Dorsolateral prefrontal cortex (tissue), 120 donors: ENCODE measurements at regions of chr2 and their contacts with region 1.

Region 1: DNA sequence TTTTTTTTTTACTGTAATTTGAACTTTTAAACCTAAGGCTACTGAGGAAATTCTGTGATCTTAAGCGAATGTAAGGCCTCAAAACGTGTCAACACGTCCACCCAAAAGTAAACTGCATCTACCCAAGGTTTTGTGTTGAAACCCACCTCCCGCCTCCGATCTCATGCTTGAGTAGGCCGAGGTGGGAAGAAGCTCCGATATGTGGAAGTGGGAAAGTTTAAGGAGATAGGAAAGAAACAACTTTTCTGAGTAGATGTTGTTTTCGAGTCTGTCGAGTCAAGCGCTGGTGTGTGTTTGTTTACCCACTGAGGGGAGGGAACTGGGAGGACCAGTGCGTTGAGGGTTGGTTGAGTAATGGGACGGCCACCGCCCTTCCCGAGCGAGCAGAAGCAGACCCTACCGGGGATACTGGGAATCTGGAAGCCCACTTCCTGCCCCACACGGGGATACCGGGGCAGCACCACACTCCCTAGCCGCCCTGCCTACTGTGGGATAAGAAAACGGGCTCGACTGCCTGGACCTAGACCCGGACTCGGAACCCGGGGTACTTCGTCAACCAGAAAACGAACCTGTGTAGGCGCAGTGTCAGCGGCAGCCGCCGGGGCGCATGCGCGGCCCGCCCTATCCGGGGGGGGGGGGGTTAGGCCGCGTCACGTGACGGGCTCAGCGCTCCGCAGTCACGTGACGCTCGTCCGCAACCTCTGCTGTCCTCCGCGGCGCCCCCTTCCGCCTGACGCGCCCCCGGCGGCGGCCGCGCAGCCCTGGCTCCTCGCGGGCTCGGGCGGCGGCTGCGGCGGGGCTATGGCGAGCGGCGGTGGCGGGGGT is at the start of gene RETREG2:
- DNase-seq: peak; percentile 70 to 81 (median 74)
- H3K4me3 ChIP-seq: peak within 1 kb of the TSS; percentile 71 to 100 (median 96)
- H3K27ac ChIP-seq: peak within 1 kb of the TSS; percentile 93 to 100 (median 99)
- H3K27me3 ChIP-seq: no peaks in the 10 kb centered on the region
- CTCF ChIP-seq: peak in 46 of 56 donors; percentile 13 to 90 (median 60)
- total RNA-seq, gene RETREG2: 151 to 274 (median 213) TPM

Region 2: DNA sequence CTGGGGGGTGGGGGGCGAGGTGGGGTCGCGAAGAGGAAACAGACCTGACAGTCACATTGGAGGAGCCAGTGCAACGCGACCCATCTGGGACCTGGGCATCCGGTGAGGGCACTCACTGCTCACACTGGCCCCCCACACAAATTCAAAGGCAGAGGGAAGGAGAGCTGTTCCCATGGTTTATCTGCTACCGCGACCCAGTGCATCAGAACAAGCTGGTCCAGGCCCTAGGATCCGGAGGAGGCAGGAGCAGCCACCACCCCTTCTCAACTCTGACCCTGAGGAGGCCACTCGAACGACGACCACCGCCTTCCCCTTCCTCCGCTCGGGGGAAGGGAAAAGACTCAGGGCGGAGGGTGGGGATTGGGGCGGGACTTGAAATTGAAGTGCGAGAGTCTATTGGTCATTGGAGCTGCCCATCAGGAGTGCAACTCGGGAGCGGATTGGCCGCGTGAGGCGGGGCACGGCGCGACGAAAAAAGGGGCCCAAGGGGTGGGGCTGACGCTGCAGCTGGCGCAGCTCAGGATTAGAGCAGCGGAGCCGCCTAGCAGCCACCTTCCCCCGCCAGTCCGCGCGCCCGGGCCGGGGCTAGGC is 218.5 kb before region 1 on chr2 and contains the start of gene CDK5R2:
- intact Hi-C with region 1: no loop called
- DNase-seq: peak; percentile 61 to 96 (median 90)
- H3K4me3 ChIP-seq: peak within 1 kb of the TSS; percentile 34 to 78 (median 62)
- H3K27ac ChIP-seq: peak within 1 kb of the TSS in 53 of 59 donors; percentile 9 to 92 (median 74)
- H3K27me3 ChIP-seq: peaks cover 0 to 75% (median 42%) of the 10 kb centered on the region in 45 donors
- CTCF ChIP-seq: no peak
- total RNA-seq, gene CDK5R2: 19.1 to 99.0 (median 62.6) TPM

Region 3: DNA sequence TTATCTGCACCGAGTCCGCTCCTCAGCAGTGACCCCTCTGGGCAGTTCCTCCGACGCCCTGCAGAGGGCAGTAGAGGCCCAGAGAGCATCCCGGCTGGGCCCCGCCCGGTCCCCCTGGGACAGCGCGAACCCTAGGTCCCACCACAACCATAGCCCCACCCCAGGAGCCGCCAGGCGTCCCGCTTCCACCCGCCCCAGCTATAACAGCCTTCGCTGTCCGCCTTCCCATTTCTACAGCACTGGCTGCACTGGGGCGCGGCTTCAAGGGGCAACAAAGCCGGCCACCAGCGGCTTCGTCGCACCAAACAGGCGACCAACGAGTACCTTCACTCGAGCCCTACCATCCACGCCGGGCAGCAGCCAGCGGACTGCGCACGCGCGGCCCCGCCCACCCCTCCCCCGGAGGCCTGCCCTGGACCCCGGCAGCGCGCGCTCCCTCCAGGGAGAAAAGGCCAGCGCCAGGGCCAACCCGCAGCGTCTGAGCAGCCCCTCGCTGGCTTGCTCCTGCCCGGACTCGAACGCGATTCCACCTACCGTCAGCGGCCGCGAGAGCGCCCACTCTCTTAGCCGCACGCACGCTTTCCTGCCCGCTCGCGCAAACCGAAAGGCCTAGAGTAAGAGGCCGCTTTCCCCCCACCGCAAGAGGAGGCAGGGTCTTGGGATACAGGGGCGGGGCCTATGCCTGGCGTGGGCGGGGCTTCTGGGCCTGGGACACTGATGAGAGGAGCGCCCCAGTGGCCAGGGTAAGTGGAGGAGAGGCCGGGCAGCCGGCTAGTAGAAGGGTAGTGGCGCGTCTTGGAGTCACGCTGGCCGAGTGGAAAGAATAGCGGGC is 17.4 kb before region 1 on chr2 and contains the start of gene NHEJ1:
- intact Hi-C with region 1: loop called (anchors 1 kb)
- DNase-seq: peak; percentile 93 to 97 (median 96)
- H3K4me3 ChIP-seq: peak within 1 kb of the TSS; percentile 56 to 97 (median 75)
- H3K27ac ChIP-seq: peak within 1 kb of the TSS; percentile 86 to 99 (median 96)
- H3K27me3 ChIP-seq: no peaks in the 10 kb centered on the region
- CTCF ChIP-seq: peak; percentile 91 to 100 (median 99)
- total RNA-seq, gene NHEJ1: 5.8 to 16.8 (median 10.2) TPM

Region 4: DNA sequence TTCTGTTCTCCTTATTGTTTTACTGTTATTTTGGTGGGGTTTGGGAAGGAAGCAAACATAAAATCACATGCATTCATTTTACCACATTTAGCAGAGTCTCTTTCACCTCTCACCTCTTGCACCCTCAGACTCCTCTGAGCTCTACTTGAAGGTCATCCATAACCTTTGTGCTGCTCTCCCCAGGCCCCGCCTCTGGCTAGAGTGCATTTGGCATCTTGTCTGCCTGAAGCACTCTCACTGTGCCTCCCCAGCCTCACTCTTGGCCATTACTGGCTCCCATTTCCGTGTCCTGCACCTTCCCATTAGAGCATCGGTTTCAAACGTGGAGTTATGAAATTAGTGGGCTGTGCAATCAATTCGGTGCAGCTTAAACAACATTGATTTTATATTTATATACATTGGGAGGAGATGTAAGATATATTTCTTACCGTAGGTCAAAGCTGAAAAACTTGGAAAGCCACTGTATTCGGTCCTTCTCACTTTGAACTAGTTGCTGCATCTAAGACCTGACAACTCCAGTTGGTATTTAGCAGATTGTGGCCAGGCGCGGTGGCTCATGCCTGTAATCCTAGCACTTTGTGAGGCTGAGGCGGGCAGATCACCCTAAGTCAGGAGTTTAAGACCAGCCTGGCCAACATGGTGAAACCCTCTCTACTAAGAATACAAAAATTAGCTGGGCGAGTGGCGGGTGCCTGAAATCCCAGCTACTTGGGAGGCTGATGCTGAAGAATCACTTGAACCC is 21.9 kb after region 1 on chr2:
- intact Hi-C with region 1: loop called in 1 of 2 experiments (anchors 2 kb)
- DNase-seq: no peak
- H3K4me3 ChIP-seq: no peak overlapping the region
- H3K27ac ChIP-seq: peak overlapping the region in 1 of 59 donors; percentile 11
- H3K27me3 ChIP-seq: no peaks in the 10 kb centered on the region
- CTCF ChIP-seq: no peak

Region 5: DNA sequence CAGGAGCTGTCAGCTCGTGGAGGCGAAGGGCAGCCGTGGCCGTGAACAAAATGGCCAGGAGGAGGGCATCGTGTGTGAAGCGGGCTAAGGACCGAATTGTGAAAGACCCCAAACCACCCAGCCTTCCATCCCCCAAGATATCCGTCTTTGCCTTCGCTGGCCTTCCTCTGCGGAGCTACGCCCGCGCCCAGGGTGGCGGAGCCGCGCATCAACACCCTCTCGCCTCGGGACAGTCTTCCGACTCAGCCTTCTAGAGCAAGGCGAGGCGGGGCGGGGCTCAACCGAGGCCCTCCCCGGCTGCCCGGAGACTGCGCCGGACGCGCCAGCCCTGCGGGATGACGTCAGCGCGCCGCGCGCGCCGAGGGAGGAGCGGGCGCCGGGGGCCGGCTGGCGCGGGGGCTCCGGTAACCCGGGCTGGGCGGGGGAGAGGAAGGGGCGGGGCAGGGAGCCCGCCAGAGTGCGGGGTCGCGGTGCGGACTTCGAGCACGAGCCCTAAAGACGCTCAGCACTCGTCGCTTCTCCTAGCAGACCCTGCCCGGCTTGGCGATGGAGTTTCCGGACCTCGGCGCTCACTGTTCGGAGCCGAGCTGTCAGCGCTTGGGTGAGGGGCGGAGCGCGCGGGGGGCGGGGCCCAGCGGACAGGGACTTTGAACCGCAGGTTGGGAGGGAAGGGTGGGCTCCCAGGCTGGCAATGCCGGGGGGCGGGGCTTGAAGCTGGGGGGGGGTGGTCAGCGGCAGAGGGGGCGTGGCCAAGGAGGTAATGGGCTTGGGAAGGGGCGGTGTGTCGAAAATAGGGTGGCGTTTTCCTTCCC is 28.9 kb after region 1 on chr2 and contains the start of gene ZFAND2B:
- intact Hi-C with region 1: loop called (anchors 2 to 5 kb)
- DNase-seq: peak; percentile 86 to 98 (median 95)
- H3K4me3 ChIP-seq: peak within 1 kb of the TSS; percentile 52 to 95 (median 80)
- H3K27ac ChIP-seq: peak within 1 kb of the TSS; percentile 85 to 99 (median 97)
- H3K27me3 ChIP-seq: no peaks in the 10 kb centered on the region
- CTCF ChIP-seq: peak in 34 of 56 donors; percentile 3 to 57 (median 26)
- total RNA-seq, gene ZFAND2B: 32.2 to 63.9 (median 46.1) TPM

Region 6: DNA sequence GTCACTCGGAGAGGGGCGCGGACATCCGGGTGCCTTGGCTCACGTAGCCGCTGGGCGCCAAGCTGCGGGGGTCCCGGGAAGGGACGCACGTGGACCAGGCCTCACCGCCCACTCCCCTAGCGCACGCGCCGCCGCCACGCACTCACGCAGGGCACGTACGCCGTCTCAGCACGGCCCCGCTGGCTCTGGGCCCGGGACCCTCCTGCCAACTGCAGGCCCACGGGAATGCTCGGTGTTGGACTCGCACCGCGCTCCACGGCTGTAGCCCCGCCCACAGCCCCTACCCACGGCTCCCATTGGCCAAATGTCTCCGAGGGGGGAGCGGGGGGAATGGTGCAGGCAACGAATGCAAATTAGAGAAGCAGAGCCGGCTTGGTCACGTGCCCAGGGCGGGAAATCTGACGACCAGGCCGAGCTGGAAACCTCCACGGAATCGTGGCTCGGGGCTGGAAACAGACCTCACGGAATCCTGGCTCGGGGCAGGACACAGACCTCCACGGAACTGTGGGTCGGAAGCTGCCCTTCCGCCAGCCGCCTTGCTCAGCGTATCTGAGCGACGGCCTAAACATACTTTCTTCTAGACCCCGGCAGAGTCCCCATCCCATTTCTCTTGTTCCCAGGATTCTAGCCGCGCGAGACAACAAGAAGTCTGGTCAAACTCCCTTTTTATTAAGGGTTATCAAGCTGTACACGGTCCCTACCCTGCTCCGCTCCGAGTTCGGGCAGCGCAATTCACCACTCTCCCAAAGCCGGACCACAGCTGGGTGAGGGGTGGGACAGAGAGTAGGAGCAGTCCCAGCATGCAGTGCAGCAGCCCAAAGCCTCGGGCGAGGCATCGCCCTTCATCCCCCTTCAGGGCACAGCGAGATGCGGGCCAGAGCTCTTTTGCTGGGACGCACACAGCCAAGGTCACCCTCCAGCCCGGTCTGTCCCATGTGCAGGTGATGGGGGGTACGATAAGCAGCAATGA is 41.3 kb after region 1 on chr2 and contains the start of gene ABCB6:
- intact Hi-C with region 1: loop called in 1 of 2 experiments (anchors 5 kb)
- DNase-seq: peak; percentile 94 to 99 (median 98)
- H3K4me3 ChIP-seq: peak within 1 kb of the TSS; percentile 40 to 95 (median 71)
- H3K27ac ChIP-seq: peak within 1 kb of the TSS; percentile 49 to 96 (median 91)
- H3K27me3 ChIP-seq: no peaks in the 10 kb centered on the region
- CTCF ChIP-seq: peak in 13 of 56 donors; percentile 2 to 55 (median 19)
- total RNA-seq, gene ABCB6: 25.8 to 68.6 (median 40.0) TPM

Region 7: GRCh38 chr2:219266886-219267285 is 89.1 kb after region 1 on chr2:
- intact Hi-C with region 1: no loop called
- DNase-seq: no peak
- H3K4me3 ChIP-seq: no peak overlapping the region
- H3K27ac ChIP-seq: no peak overlapping the region
- H3K27me3 ChIP-seq: no peaks in the 10 kb centered on the region
- CTCF ChIP-seq: no peak

Region 8: GRCh38 chr2:219278655-219279516 is 101.1 kb after region 1 on chr2 and contains the start of gene DNAJB2:
- intact Hi-C with region 1: loop called (anchors 2 kb)
- DNase-seq: peak; percentile 98 to 99 (median 99)
- H3K4me3 ChIP-seq: peak within 1 kb of the TSS; percentile 73 to 99 (median 92)
- H3K27ac ChIP-seq: peak within 1 kb of the TSS; percentile 97 to 100 (median 100)
- H3K27me3 ChIP-seq: no peaks in the 10 kb centered on the region
- CTCF ChIP-seq: peak in 28 of 56 donors; percentile 2 to 57 (median 28)
- total RNA-seq, gene DNAJB2: 197 to 638 (median 283) TPM

Region 9: GRCh38 chr2:220198920-220199319 is 1021.2 kb after region 1 on chr2:
- intact Hi-C with region 1: no loop called
- DNase-seq: no peak
- H3K4me3 ChIP-seq: no peak overlapping the region
- H3K27ac ChIP-seq: no peak overlapping the region
- H3K27me3 ChIP-seq: no peaks in the 10 kb centered on the region
- CTCF ChIP-seq: no peak